Left ventricle myocardium inferior (tissue), 1 donor: ENCODE measurements at regions of chr19 and their contacts with region 1.

Region 1: DNA sequence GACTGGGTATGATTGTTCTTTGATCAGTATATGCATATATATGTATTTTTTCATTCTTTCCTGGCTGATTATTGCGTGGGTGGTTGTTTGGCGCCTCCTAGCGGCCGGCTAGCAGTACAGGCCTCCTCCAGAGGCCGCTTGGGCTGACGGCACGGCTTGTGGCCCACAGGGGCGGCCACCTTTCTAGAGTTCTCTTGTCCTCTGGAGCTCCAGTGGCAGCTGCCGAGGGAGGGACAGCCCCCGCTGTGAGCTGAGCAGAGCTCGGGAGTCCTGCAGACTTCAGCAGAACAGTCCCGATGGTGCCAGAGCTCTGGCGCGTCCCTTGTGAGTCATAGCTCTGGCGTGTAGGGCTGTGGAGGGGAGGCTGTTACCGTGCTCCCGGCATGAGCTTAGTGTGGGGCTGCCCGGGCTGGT is 22.5 kb upstream of the ZNF429 start:
- DNase-seq: peak; percentile 63
- H3K4me3 ChIP-seq: peak overlapping the region; percentile 45
- H3K27ac ChIP-seq: peak overlapping the region; percentile 26
- H3K4me1 ChIP-seq: no peaks in the 10 kb centered on the region
- H3K27me3 ChIP-seq: no peaks in the 10 kb centered on the region
- CTCF ChIP-seq: peak; percentile 88

Region 2: DNA sequence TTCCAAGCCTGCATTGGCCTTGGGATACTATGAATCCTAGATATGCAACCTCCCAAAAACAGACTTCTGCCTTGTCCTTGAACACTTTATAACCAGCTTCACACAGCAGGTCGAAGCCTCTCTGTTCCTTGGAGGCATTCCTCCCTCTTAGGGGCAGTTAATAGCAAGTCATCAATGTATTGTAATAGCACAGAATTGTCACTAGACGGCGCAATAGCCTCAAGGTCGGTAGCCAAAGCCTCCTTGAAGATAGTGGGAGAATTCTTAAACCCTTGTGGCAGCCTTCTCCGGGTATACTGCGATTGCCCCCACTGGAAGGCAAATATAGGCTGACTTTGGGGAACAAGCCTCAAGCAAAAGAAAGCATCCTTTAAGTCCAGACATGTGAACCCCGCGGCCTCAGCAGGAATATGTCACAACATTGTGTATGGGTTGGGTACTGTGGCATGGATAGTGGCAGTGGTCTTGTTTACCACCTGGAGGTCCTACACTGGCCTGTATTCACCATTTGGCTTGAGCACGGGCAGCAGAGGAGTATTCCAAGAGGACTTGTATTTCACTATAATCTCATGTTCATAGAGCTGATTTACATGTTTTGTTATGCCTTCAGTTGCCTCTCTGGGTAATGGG is 279.9 kb before region 1 on chr19:
- intact Hi-C with region 1: loop called (anchors 10 kb)
- DNase-seq: no peak
- H3K4me3 ChIP-seq: no peak overlapping the region
- H3K27ac ChIP-seq: no peak overlapping the region
- H3K4me1 ChIP-seq: no peaks in the 10 kb centered on the region
- H3K27me3 ChIP-seq: peaks cover 2% of the 10 kb centered on the region
- CTCF ChIP-seq: peak; percentile 76

Region 3: DNA sequence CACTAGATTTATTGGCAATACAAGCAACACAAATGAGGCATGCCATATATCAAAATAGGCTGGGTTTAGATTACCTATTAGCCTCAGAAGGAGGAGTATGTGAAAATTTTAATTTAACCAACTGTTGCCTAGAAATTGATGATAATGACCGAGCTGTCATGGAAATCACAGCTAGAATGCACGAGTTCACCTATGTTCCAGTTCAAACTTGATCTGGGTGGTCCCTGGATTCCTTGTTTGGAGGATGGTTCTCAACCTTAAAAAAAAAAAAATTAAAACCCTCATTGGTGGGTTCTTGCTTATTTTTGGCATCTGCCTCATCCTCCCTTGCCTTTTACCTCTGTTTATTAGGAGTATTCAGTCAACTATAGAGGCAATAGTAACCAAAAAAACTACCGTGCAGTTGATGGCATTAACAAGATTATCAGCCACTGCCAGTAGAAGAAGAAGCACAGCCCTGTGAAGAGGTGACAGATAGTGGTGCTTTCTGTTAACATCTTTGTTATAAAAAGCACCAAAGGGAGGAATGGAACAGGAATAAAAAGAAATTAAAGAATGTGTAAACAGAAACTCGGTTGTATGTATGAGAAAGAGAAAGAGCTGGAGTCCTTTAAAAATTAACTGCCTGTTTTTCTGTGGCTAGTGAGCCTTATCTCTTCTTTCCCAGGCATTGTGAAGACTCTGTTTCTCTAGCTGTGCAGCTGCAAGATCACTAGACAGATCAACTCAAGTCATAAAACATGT is 129.0 kb after region 1 on chr19:
- intact Hi-C with region 1: no loop called
- DNase-seq: no peak
- H3K4me3 ChIP-seq: no peak overlapping the region
- H3K27ac ChIP-seq: peak overlapping the region; percentile 17
- H3K4me1 ChIP-seq: no peaks in the 10 kb centered on the region
- H3K27me3 ChIP-seq: no peaks in the 10 kb centered on the region
- CTCF ChIP-seq: no peak

Region 4: DNA sequence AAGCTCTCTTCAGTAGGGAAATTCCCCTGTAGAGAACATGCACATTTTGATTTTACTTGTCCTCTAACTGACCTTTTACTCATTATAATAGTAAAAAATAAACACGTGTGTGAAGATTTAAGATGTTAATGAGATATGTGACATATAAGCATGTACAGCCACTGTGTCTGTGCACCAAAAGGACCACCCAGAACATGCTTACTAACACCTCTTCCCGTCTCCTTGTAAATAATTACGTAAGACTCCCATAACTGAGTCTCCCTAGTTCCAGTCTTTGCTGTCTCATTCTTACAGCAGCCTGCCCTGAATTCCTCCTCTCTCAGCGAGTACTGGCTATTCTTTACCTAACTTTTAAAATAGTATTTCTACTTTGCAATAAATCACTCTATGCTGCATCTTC is 230.9 kb after region 1 on chr19:
- intact Hi-C with region 1: no loop called
- DNase-seq: no peak
- H3K4me3 ChIP-seq: no peak overlapping the region
- H3K27ac ChIP-seq: no peak overlapping the region
- H3K4me1 ChIP-seq: no peaks in the 10 kb centered on the region
- H3K27me3 ChIP-seq: no peaks in the 10 kb centered on the region
- CTCF ChIP-seq: no peak